ENCODE measurements at regions of chr6 and their contacts with region 1.

Region 1: GRCh38 chr6:151409260-151409659 is 17.9 kb upstream of the ZBTB2 start:
- DNase-seq: no peak
- H3K4me3 ChIP-seq: no peak overlapping the region
- H3K27ac ChIP-seq: no peak overlapping the region
- H3K4me1 ChIP-seq: no peaks in the 10 kb centered on the region
- H3K27me3 ChIP-seq: no peaks in the 10 kb centered on the region
- CTCF ChIP-seq: no peak
- EP300 ChIP-seq: no peak
- POLR2A ChIP-seq: no peak
- RAD21 ChIP-seq: no peak

Region 2: GRCh38 chr6:151475653-151476523 is 66.6 kb after region 1 on chr6:
- CTCF ChIA-PET with region 1: interaction called, 10 read pairs
- POLR2A ChIA-PET with region 1: no interaction called
- DNase-seq: peak; percentile 29 to 62
- H3K4me3 ChIP-seq: no peak overlapping the region
- H3K27ac ChIP-seq: no peak overlapping the region
- H3K4me1 ChIP-seq: no peaks in the 10 kb centered on the region
- H3K27me3 ChIP-seq: no peaks in the 10 kb centered on the region
- CTCF ChIP-seq: peak in 2 of 3 experiments; percentile 46 to 57; a peak in 2 of 4 replicates
- EP300 ChIP-seq: no peak
- POLR2A ChIP-seq: no peak
- RAD21 ChIP-seq: peak; percentile 44 to 57